ENCODE measurements at regions of chr1 and their contacts with region 1.

Region 1: GRCh38 chr1:66436378-66437145 is 97.4 kb upstream of the SGIP1 start:
- DNase-seq: peak; percentile 80
- ATAC-seq: peak; percentile 73
- H3K4me3 ChIP-seq: no peak overlapping the region
- H3K27ac ChIP-seq: no peak overlapping the region
- H3K4me1 ChIP-seq: peaks cover 5% of the 10 kb centered on the region
- H3K27me3 ChIP-seq: no peaks in the 10 kb centered on the region
- CTCF ChIP-seq: peak; percentile 53
- POLR2A ChIP-seq: no peak
- RAD21 ChIP-seq: peak; percentile 39; the same call in 1 of the 2 replicates

Region 2: GRCh38 chr1:66258404-66259105 is 178.0 kb before region 1 on chr1:
- CTCF ChIA-PET with region 1: interaction called, 7 read pairs
- POLR2A ChIA-PET with region 1: no interaction called
- dilution Hi-C with region 1: loop called (anchors 10 kb)
- in situ Hi-C with region 1: loop called (anchors 5 kb)
- intact Hi-C with region 1: no loop called
- DNase-seq: peak; percentile 57
- ATAC-seq: peak; percentile 66
- H3K4me3 ChIP-seq: no peak overlapping the region
- H3K27ac ChIP-seq: peak overlapping the region; percentile 27; the same call in 1 of the 2 replicates
- H3K4me1 ChIP-seq: peaks cover 12% of the 10 kb centered on the region
- H3K27me3 ChIP-seq: no peaks in the 10 kb centered on the region
- CTCF ChIP-seq: no peak
- POLR2A ChIP-seq: no peak
- RAD21 ChIP-seq: no peak

Region 3: DNA sequence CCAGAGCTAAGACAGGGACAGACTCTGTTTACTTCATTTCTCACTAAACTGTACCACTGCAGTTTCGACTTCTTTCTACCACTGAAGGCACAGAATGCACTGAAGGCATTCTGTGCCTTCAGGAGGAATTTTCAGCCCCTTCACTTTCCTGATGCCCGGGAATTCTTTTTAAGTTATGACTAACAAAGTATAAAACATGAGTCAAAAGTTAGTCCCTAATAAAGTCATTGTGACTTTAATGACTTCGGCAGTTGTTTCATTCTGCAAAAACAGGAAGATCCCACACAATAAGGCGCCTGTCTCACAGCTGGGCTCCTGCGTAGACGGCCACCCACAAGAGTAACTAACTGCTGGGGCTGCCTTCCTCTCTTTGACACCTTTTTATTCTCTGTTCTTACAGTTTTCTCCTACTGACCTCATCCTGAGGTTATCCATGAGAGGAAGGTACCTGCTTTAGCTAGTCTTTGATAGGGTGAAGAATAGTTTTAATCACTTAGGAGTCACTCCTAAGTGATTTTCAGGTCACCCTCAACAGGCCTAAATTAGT is 86.5 kb before region 1 on chr1:
- CTCF ChIA-PET with region 1: interaction called, 3 read pairs
- POLR2A ChIA-PET with region 1: no interaction called
- dilution Hi-C with region 1: no loop called
- in situ Hi-C with region 1: no loop called
- intact Hi-C with region 1: loop called (anchors 5 kb)
- DNase-seq: peak; percentile 34
- ATAC-seq: peak; percentile 33; the same call in 1 of the 2 replicates
- H3K4me3 ChIP-seq: no peak overlapping the region; the same call in 1 of the 2 replicates
- H3K27ac ChIP-seq: peak overlapping the region; percentile 47
- H3K4me1 ChIP-seq: peaks cover 19% of the 10 kb centered on the region
- H3K27me3 ChIP-seq: no peaks in the 10 kb centered on the region
- CTCF ChIP-seq: no peak
- POLR2A ChIP-seq: no peak
- RAD21 ChIP-seq: no peak

Region 4: GRCh38 chr1:66374561-66375111 is 61.9 kb before region 1 on chr1:
- CTCF ChIA-PET with region 1: interaction called, 5 read pairs
- POLR2A ChIA-PET with region 1: no interaction called
- dilution Hi-C with region 1: no loop called
- in situ Hi-C with region 1: no loop called
- intact Hi-C with region 1: loop called (anchors 2 kb)
- DNase-seq: peak; percentile 95
- ATAC-seq: peak; percentile 66
- H3K4me3 ChIP-seq: no peak overlapping the region
- H3K27ac ChIP-seq: no peak overlapping the region
- H3K4me1 ChIP-seq: peaks cover 22% of the 10 kb centered on the region
- H3K27me3 ChIP-seq: no peaks in the 10 kb centered on the region
- CTCF ChIP-seq: no peak
- POLR2A ChIP-seq: no peak
- RAD21 ChIP-seq: no peak

Region 5: GRCh38 chr1:66521721-66522365 is 85.3 kb after region 1 on chr1:
- CTCF ChIA-PET with region 1: no interaction called
- POLR2A ChIA-PET with region 1: no interaction called
- dilution Hi-C with region 1: no loop called
- in situ Hi-C with region 1: no loop called
- intact Hi-C with region 1: no loop called
- DNase-seq: peak; percentile 95
- ATAC-seq: peak; percentile 77
- H3K4me3 ChIP-seq: no peak overlapping the region
- H3K27ac ChIP-seq: no peak overlapping the region
- H3K4me1 ChIP-seq: peaks cover 6% of the 10 kb centered on the region; the same call in 1 of the 2 replicates
- H3K27me3 ChIP-seq: no peaks in the 10 kb centered on the region
- CTCF ChIP-seq: no peak
- POLR2A ChIP-seq: no peak
- RAD21 ChIP-seq: 0 out of 2 replicates have a peak, but pooled peaks have one; percentile 6

Region 6: GRCh38 chr1:66860529-66860928 is 424.0 kb after region 1 on chr1:
- CTCF ChIA-PET with region 1: no interaction called
- POLR2A ChIA-PET with region 1: no interaction called
- dilution Hi-C with region 1: no loop called
- in situ Hi-C with region 1: no loop called
- intact Hi-C with region 1: no loop called
- DNase-seq: no peak
- ATAC-seq: no peak
- H3K4me3 ChIP-seq: no peak overlapping the region
- H3K27ac ChIP-seq: no peak overlapping the region
- H3K4me1 ChIP-seq: no peaks in the 10 kb centered on the region
- H3K27me3 ChIP-seq: no peaks in the 10 kb centered on the region
- CTCF ChIP-seq: no peak
- POLR2A ChIP-seq: no peak
- RAD21 ChIP-seq: no peak

Measured in IMR-90 (cell line).